ENCODE measurements at regions of chr9 and their contacts with region 1.

Region 1: GRCh38 chr9:13719981-13720676 is 440.6 kb upstream of the MPDZ start:
- DNase-seq: no peak
- H3K4me3 ChIP-seq: no peak overlapping the region
- H3K27ac ChIP-seq: no peak overlapping the region
- H3K4me1 ChIP-seq: no peaks in the 10 kb centered on the region
- H3K27me3 ChIP-seq: no peaks in the 10 kb centered on the region
- CTCF ChIP-seq: no peak
- EP300 ChIP-seq: no peak
- POLR2A ChIP-seq: no peak

Region 2: DNA sequence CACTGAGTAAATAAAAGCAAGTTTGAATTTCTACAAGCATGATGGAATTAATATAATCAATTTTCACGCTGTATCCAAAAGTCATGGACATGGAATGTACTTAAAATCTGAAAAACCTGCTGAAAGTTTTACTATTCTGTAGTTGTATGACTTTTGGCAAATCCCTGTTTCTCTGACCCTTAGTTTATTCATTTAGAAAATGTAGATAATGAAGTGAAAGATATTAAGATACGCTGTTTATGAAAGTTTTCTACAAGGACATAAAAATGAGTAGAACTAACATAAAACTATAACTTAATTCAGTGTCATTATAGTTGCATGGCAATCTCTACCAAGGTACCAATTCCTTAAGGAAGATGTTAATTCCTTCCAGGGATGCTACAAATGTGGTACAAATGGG is 77.5 kb before region 1 on chr9:
- in situ Hi-C with region 1: no loop called
- intact Hi-C with region 1: no loop called
- DNase-seq: no peak
- H3K4me3 ChIP-seq: no peak overlapping the region
- H3K27ac ChIP-seq: no peak overlapping the region
- H3K4me1 ChIP-seq: no peaks in the 10 kb centered on the region
- H3K27me3 ChIP-seq: no peaks in the 10 kb centered on the region
- CTCF ChIP-seq: no peak
- EP300 ChIP-seq: no peak
- POLR2A ChIP-seq: no peak

Region 3: DNA sequence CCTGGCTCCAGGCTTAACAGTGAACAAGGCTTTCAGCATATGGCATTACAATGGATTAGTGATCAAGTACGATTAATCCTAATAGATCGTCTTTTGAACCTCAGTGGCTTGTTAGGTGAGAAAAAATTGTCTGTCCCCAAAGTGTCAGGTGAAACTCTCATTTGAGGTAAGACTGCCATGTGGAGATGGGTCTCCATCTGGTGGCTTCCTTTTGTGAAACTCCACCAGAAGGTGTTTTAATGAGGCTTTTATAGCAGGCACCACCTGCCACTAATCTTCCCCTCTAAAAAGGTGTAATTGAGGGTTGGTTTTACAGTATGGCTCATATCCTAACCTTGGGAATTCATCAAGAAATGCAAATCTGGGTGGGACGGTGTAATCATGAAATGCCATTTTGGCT is 30.5 kb after region 1 on chr9:
- in situ Hi-C with region 1: no loop called
- intact Hi-C with region 1: loop called (anchors 1 kb)
- DNase-seq: no peak
- H3K4me3 ChIP-seq: no peak overlapping the region
- H3K27ac ChIP-seq: no peak overlapping the region
- H3K4me1 ChIP-seq: no peaks in the 10 kb centered on the region
- H3K27me3 ChIP-seq: no peaks in the 10 kb centered on the region
- CTCF ChIP-seq: no peak
- EP300 ChIP-seq: no peak
- POLR2A ChIP-seq: no peak

Measured in transverse colon (tissue), 4 donors.